ENCODE measurements at regions of chr4 and their contacts with region 1.

Region 1: GRCh38 chr4:74311696-74312313 is 3.5 kb downstream of the EPGN start:
- DNase-seq: no peak
- ATAC-seq: peak; percentile 49

Region 2: GRCh38 chr4:74189331-74190043 is 122.3 kb before region 1 on chr4:
- intact Hi-C with region 1: loop called (anchors 10 kb)
- DNase-seq: no peak
- ATAC-seq: peak; percentile 39